Activated CD4-positive, alpha-beta memory T cell treated with anti-CD3 and anti-CD28 coated beads for 36 hours (primary cell): ENCODE measurements at regions of chr17 and their contacts with region 1.

Region 1: DNA sequence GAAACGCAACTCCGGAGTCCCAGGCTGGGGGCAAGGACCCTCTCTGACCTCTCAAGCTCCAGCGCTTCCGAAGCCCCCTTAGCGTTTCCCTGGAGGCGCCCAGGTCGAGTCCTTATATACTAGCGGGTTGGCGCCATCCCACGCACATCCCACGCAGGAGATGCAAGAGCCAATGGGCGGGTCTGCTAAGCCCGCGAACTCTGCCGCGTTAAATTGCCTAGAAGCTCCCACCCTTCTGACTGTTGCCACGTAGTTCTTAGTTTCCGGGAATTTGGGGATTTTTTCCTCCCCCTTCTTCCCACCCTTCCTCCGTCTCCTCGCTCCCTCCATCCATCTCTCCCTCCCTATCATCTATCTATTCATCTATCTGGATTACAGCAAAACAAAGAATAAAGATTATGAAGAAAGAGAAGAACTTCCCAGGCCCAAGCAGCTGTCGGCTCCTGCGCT is at the start of gene SLFN11:
- DNase-seq: peak; percentile 94
- H3K4me3 Mint-ChIP-seq: peak within 1 kb of the TSS; percentile 96
- H3K27ac Mint-ChIP-seq: peak within 1 kb of the TSS; percentile 97
- H3K4me1 Mint-ChIP-seq: peaks cover 53% of the 10 kb centered on the region
- H3K27me3 Mint-ChIP-seq: no peaks in the 10 kb centered on the region
- total RNA-seq, gene SLFN11: 64.8 to 68.8 TPM

Region 2: GRCh38 chr17:35352284-35352683 is 21.3 kb before region 1 on chr17:
- CTCF ChIA-PET with region 1: no interaction called
- POLR2A ChIA-PET with region 1: no interaction called
- intact Hi-C with region 1: no loop called
- DNase-seq: no peak
- H3K4me3 Mint-ChIP-seq: no peak overlapping the region
- H3K27ac Mint-ChIP-seq: no peak overlapping the region
- H3K4me1 Mint-ChIP-seq: peaks cover 11% of the 10 kb centered on the region
- H3K27me3 Mint-ChIP-seq: no peaks in the 10 kb centered on the region

Region 3: GRCh38 chr17:35448214-35448898 is 74.8 kb after region 1 on chr17 and contains the start of gene SLFN13:
- CTCF ChIA-PET with region 1: interaction called, 3 read pairs
- POLR2A ChIA-PET with region 1: interaction called, 7 read pairs
- intact Hi-C with region 1: loop called (anchors 1 kb)
- DNase-seq: peak; percentile 97
- H3K4me3 Mint-ChIP-seq: peak within 1 kb of the TSS; percentile 57
- H3K27ac Mint-ChIP-seq: peak within 1 kb of the TSS; percentile 33
- H3K4me1 Mint-ChIP-seq: peaks cover 16% of the 10 kb centered on the region
- H3K27me3 Mint-ChIP-seq: no peaks in the 10 kb centered on the region
- total RNA-seq, gene SLFN13: 46.0 to 48.7 TPM

Region 4: DNA sequence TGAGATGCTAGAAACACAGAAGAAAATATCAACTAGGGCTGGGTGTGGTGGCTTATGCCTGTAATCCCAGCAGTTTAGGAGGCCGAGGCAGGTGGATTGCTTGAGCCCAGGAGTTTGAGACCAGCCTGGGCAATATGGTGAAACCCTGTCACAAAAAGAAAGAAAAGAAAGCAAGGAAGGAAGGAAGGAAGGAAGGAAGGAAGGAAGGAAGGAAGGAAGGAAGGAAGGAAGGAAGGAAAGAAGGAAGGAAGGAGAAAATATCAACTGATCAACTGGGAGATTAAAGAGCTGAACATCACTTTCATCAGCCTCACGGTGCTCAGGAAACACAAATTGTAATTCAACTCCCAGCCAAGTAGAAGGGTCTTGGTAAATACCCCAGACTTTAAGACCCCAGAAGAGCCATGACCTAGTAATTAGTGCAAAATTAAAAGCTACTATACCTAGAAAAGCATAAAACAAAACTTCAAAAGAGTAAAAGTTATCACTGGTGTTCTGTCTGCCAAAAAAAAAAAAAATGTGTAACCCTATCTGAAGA is 102.8 kb after region 1 on chr17:
- CTCF ChIA-PET with region 1: no interaction called
- POLR2A ChIA-PET with region 1: no interaction called
- intact Hi-C with region 1: no loop called
- DNase-seq: no peak
- H3K4me3 Mint-ChIP-seq: no peak overlapping the region
- H3K27ac Mint-ChIP-seq: peak overlapping the region; percentile 15
- H3K4me1 Mint-ChIP-seq: peaks cover 36% of the 10 kb centered on the region
- H3K27me3 Mint-ChIP-seq: no peaks in the 10 kb centered on the region